HepG2 (cell line): ENCODE measurements at regions of chr11 and their contacts with region 1.

Region 1: DNA sequence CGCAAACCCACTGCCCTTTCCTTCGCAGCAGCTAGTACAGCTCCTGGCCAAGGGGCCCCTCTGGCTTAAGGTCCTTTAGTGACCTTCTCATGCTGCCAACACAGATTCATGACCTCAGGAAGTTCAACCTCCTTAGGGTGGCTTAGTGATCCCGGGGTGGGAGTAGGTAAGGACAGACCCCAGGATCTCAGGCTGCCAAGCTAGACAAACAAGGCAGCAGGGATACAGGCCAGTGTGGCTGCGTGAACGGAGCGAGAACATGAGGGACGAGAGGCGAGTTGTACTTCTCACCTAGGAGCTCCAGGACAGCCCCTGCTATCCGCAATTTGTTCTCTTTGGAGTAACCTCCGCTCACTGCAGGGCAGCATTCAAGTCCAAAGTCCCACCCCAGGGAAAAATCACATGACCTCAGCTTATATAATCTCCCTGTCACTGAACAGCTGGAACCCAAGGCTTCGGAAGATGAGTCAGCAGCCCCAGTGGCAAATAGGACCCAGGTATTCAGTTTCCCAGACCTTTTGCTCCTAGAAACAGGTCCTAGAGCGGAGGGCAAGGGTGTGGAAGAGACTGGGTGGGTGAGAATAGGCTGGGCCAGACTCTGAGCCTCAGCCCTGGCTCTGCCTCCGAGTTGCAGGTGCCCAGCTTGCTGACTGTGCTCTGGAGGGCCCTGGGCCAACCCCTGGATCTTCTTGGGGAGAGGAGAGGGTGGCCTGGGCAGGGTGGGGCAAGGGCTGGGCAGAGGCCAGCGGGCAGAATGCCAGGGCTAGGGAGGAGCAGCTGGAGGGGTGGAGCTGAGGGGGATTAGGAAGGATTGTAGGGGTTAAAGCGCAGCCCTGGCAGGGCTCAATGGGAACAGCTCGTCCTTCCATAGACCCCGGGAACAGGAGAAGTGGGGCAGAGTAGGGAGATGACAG is 13.1 kb downstream of the USP2 start:
- DNase-seq: peak; percentile 93
- ATAC-seq: peak; percentile 76
- H3K4me3 ChIP-seq: peak overlapping the region; percentile 43 to 68 (median 53)
- H3K27ac ChIP-seq: peak overlapping the region; percentile 93
- H3K4me1 ChIP-seq: peaks cover 91% of the 10 kb centered on the region
- H3K27me3 ChIP-seq: no peaks in the 10 kb centered on the region
- CTCF ChIP-seq: no peak
- EP300 ChIP-seq: peak in 1 of 2 experiments; percentile 65; a peak in 2 of 4 replicates
- POLR2A ChIP-seq: peak; percentile 64 to 71; a peak in 3 of 4 replicates
- RAD21 ChIP-seq: peak; percentile 28; the same call in 1 of the 2 replicates

Region 2: GRCh38 chr11:119318304-119319122 is 49.9 kb before region 1 on chr11:
- CTCF ChIA-PET with region 1: interaction called, 3 read pairs
- POLR2A ChIA-PET with region 1: interaction called, 12 read pairs
- in situ Hi-C with region 1: no loop called
- intact Hi-C with region 1: no loop called
- DNase-seq: peak; percentile 52
- ATAC-seq: peak; percentile 34
- H3K4me3 ChIP-seq: peak overlapping the region; percentile 53 to 77 (median 76)
- H3K27ac ChIP-seq: no peak overlapping the region
- H3K4me1 ChIP-seq: peaks cover 73% of the 10 kb centered on the region
- H3K27me3 ChIP-seq: peaks cover 0 to 9% of the 10 kb centered on the region in 2 experiments; a peak in 1 of 5 replicates
- CTCF ChIP-seq: no peak
- EP300 ChIP-seq: no peak
- POLR2A ChIP-seq: peak in 1 of 2 experiments; percentile 41; a peak in 1 of 4 replicates
- RAD21 ChIP-seq: no peak

Region 3: GRCh38 chr11:119334174-119334930 is 34.0 kb before region 1 on chr11 and contains the start of gene RNF26:
- CTCF ChIA-PET with region 1: interaction called, 17 read pairs
- POLR2A ChIA-PET with region 1: interaction called, 31 read pairs
- in situ Hi-C with region 1: loop called (anchors 5 kb)
- intact Hi-C with region 1: no loop called
- DNase-seq: peak; percentile 97
- ATAC-seq: peak; percentile 87
- H3K4me3 ChIP-seq: peak within 1 kb of the TSS; percentile 78 to 94 (median 87)
- H3K27ac ChIP-seq: peak within 1 kb of the TSS; percentile 71
- H3K4me1 ChIP-seq: peaks cover 55% of the 10 kb centered on the region
- H3K27me3 ChIP-seq: no peaks in the 10 kb centered on the region; a peak in 1 of 5 replicates
- CTCF ChIP-seq: no peak
- EP300 ChIP-seq: no peak
- POLR2A ChIP-seq: peak; percentile 79 to 84
- RAD21 ChIP-seq: no peak
- total RNA-seq, gene RNF26: 11.9 and 20.8 TPM in 2 replicates

Region 4: GRCh38 chr11:119339589-119340343 is 28.6 kb before region 1 on chr11:
- CTCF ChIA-PET with region 1: interaction called, 17 read pairs
- POLR2A ChIA-PET with region 1: interaction called, 31 read pairs
- in situ Hi-C with region 1: loop called (anchors 5 kb)
- intact Hi-C with region 1: no loop called
- DNase-seq: peak; percentile 28
- ATAC-seq: peak; percentile 61
- H3K4me3 ChIP-seq: peak overlapping the region; percentile 57 to 79 (median 62); a peak in 5 of 6 replicates
- H3K27ac ChIP-seq: no peak overlapping the region
- H3K4me1 ChIP-seq: peaks cover 51% of the 10 kb centered on the region
- H3K27me3 ChIP-seq: peaks cover 2 to 40% of the 10 kb centered on the region in 2 experiments; a peak in 4 of 5 replicates
- CTCF ChIP-seq: peak; percentile 81
- EP300 ChIP-seq: no peak
- POLR2A ChIP-seq: no peak
- RAD21 ChIP-seq: peak; percentile 76

Region 5: DNA sequence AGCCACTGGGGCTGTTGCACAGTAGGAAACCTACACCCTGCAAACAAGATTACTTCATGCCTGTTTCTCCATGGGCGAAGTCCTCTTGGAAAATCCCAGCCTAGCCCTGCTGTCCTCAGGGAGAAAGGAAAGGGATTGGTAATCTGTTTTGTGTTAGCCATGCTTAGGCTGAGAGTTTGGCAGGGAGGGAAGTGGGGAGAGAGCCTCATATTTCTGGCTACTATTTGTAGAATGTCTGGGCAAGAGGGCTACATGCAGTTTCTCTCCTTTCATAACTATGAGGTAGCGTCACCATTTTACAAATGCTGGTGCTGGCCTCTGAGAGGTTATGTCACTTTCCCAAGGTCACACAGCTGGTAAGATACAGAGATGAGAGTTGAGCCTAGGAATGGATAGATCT is 21.1 kb before region 1 on chr11:
- CTCF ChIA-PET with region 1: no interaction called
- POLR2A ChIA-PET with region 1: interaction called, 21 read pairs
- in situ Hi-C with region 1: no loop called
- intact Hi-C with region 1: loop called (anchors 2 kb)
- DNase-seq: peak; percentile 36
- ATAC-seq: peak; percentile 52
- H3K4me3 ChIP-seq: no peak overlapping the region
- H3K27ac ChIP-seq: no peak overlapping the region
- H3K4me1 ChIP-seq: peaks cover 34% of the 10 kb centered on the region
- H3K27me3 ChIP-seq: peaks cover 2 to 44% of the 10 kb centered on the region in 2 experiments; a peak in 4 of 5 replicates
- CTCF ChIP-seq: no peak
- EP300 ChIP-seq: no peak
- POLR2A ChIP-seq: no peak
- RAD21 ChIP-seq: no peak

Region 6: GRCh38 chr11:119356349-119357031 is 11.9 kb before region 1 on chr11:
- CTCF ChIA-PET with region 1: interaction called, 3 read pairs
- POLR2A ChIA-PET with region 1: interaction called, 21 read pairs
- in situ Hi-C with region 1: no loop called
- intact Hi-C with region 1: loop called (anchors 2 kb)
- DNase-seq: no peak
- ATAC-seq: no peak
- H3K4me3 ChIP-seq: no peak overlapping the region
- H3K27ac ChIP-seq: no peak overlapping the region
- H3K4me1 ChIP-seq: peaks cover 67% of the 10 kb centered on the region
- H3K27me3 ChIP-seq: no peaks in the 10 kb centered on the region
- CTCF ChIP-seq: peak; percentile 42; the same call in 1 of the 2 replicates
- EP300 ChIP-seq: no peak
- POLR2A ChIP-seq: no peak
- RAD21 ChIP-seq: no peak

Region 7: DNA sequence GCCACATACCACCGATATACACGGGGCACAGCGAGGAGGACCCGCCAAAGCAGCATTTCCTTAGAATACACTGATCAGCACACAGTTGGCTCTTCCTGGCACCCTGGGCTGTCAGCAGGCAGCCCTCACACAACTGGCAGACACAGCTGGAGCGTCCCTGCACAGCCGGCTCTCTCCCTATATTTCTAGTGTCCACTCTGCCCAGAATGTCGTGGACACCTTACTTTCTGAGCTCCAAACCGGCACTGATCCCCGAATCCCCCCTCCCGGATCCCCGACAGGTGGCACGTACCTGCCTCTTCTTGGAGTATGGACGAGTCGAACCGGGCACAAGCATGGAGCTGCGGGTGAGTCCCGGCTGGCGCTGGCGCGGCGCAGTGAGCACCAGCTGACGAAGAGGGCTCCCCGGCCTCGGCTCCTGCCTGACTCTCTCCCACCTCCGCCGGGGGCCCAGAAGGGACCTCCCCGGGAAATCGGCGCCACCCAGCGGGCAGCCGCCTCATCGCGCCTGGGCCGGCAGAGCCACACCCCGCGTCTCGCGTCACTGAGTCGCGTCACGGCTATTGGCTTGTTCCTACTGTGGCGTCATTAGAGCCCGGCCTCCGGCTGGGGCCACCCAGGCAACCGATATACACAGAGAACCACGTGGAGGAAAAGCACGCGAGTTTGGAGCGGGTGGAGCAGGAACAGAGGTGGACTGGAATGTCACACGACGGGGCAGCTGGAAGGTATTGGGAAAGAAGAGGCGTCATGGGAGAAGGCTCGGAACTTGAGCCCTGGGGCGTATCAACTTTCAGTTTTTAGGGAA is 13.0 kb after region 1 on chr11 and contains the start of gene USP2:
- CTCF ChIA-PET with region 1: no interaction called
- POLR2A ChIA-PET with region 1: interaction called, 28 read pairs
- in situ Hi-C with region 1: no loop called
- intact Hi-C with region 1: no loop called
- DNase-seq: peak; percentile 93
- ATAC-seq: peak; percentile 88
- H3K4me3 ChIP-seq: peak within 1 kb of the TSS; percentile 67 to 82 (median 68)
- H3K27ac ChIP-seq: peak within 1 kb of the TSS; percentile 76
- H3K4me1 ChIP-seq: peaks cover 70% of the 10 kb centered on the region
- H3K27me3 ChIP-seq: no peaks in the 10 kb centered on the region; a peak in 1 of 5 replicates
- CTCF ChIP-seq: peak; percentile 99
- EP300 ChIP-seq: peak in 1 of 2 experiments; percentile 17; a peak in 1 of 4 replicates
- POLR2A ChIP-seq: peak in 1 of 2 experiments; percentile 61; a peak in 1 of 4 replicates
- RAD21 ChIP-seq: peak; percentile 94
- total RNA-seq, gene USP2: 6.0 and 7.2 TPM in 2 replicates